ENCODE measurements at regions of chr2 and their contacts with region 1.

Region 1: DNA sequence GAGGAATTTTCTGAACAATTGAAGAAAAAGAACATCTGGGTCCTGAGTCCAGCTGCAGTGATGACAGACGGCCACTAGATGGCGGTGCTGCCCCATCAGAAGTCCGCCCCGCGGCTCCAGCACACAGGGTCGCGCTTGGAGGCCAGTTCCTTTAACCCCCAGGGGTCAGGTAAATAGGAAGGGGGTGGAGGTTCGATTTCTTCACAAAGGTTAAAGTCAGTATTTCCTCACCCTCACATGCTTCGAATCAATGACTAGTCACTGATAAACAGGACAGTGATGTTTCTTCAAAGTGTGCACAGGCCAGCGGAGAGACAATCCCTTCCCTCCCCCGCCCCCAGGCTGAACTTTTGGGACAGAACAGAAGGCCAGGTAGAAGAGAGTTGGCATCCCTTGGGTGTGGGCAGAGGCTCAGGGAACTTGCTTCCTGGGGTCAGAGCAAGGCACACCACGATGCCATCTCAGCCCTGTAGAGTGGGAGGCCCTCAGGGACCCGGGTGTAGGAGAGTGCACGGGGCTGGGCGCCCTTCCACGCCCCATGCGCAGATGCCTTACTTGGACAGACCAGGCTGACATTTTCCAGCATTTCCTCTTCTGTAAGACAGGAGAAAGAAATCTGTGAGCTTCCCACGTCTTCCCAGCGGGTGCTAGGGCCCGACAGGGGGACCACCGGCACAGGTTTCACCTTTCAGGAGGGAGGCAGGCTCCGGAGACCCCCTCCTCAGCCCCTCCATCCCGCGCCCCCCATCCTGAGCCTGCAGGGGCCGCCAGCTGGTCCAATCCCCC is 722 bp downstream of the APOB start:
- DNase-seq: peak; percentile 73
- ATAC-seq: peak; percentile 64
- H3K4me3 Mint-ChIP-seq: no peak overlapping the region
- H3K27ac Mint-ChIP-seq: no peak overlapping the region
- H3K4me1 Mint-ChIP-seq: peaks cover 3% of the 10 kb centered on the region
- H3K27me3 Mint-ChIP-seq: peaks cover 26% of the 10 kb centered on the region

Region 2: DNA sequence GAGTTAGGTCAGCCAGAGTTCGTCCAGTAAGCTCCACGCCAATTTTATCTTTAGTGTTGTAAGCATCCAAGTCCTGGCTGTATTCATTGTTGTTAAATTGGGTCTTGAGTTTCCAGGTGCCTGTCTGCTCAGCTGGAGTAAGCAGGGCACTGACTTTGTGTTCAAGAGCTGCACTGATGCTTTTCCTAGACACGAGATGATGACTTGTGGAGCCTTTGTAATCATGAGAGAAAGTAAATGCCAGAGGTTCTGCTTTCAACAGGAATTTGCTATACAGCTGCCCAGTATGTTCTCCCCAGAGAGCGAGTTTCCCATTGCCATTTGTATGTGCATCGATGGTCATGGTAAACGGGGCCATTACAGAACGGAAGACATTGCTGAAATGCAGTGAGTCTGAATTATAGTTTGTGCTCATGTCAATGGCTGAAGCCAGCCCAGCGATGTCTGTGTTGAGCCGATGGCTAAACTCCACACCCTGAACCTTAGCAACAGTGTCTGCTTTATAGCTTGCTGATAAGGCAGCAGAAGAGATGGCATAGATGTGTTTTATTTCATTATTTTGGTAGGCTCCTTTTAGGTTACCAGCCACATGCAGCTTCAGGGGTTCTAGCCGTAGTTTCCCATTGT is 32.2 kb before region 1 on chr2:
- CTCF ChIA-PET with region 1: no interaction called
- POLR2A ChIA-PET with region 1: no interaction called
- intact Hi-C with region 1: no loop called
- DNase-seq: no peak
- ATAC-seq: no peak
- H3K4me3 Mint-ChIP-seq: no peak overlapping the region
- H3K27ac Mint-ChIP-seq: no peak overlapping the region
- H3K4me1 Mint-ChIP-seq: no peaks in the 10 kb centered on the region
- H3K27me3 Mint-ChIP-seq: peaks cover 3% of the 10 kb centered on the region

Region 3: GRCh38 chr2:21032338-21033236 is 10.6 kb before region 1 on chr2:
- CTCF ChIA-PET with region 1: interaction called, 10 read pairs
- POLR2A ChIA-PET with region 1: no interaction called
- intact Hi-C with region 1: no loop called
- DNase-seq: no peak
- ATAC-seq: no peak
- H3K4me3 Mint-ChIP-seq: no peak overlapping the region
- H3K27ac Mint-ChIP-seq: no peak overlapping the region
- H3K4me1 Mint-ChIP-seq: no peaks in the 10 kb centered on the region
- H3K27me3 Mint-ChIP-seq: peaks cover 12% of the 10 kb centered on the region

Region 4: GRCh38 chr2:21118302-21118920 is 75.3 kb after region 1 on chr2:
- CTCF ChIA-PET with region 1: interaction called, 4 read pairs
- POLR2A ChIA-PET with region 1: no interaction called
- intact Hi-C with region 1: loop called (anchors 1 kb)
- DNase-seq: peak; percentile 39
- ATAC-seq: no peak
- H3K4me3 Mint-ChIP-seq: no peak overlapping the region
- H3K27ac Mint-ChIP-seq: no peak overlapping the region
- H3K4me1 Mint-ChIP-seq: no peaks in the 10 kb centered on the region
- H3K27me3 Mint-ChIP-seq: peaks cover 5% of the 10 kb centered on the region

Region 5: DNA sequence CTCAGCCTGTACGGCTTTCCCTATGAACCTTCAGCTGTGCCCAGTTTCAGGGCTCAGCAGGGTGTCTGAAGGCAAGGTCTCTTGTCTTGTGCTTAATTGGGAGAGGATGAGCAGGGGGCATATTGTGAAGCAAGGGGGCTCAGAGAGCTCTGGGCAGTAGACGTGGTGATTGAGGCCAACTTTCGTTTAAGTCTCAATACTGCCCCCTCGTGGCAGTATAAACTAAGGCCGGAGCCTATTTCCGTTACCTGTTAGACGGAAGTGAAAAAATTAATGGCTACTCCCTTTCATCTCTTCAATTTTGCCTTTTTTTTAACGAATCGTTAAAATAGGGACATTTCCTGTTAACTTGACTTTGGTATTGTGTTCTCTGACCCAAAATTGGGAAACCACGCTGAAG is 274.0 kb after region 1 on chr2:
- CTCF ChIA-PET with region 1: interaction called, 22 read pairs
- POLR2A ChIA-PET with region 1: no interaction called
- intact Hi-C with region 1: loop called (anchors 1 kb)
- DNase-seq: peak; percentile 55
- ATAC-seq: no peak
- H3K4me3 Mint-ChIP-seq: no peak overlapping the region
- H3K27ac Mint-ChIP-seq: no peak overlapping the region
- H3K4me1 Mint-ChIP-seq: no peaks in the 10 kb centered on the region
- H3K27me3 Mint-ChIP-seq: no peaks in the 10 kb centered on the region

Region 6: DNA sequence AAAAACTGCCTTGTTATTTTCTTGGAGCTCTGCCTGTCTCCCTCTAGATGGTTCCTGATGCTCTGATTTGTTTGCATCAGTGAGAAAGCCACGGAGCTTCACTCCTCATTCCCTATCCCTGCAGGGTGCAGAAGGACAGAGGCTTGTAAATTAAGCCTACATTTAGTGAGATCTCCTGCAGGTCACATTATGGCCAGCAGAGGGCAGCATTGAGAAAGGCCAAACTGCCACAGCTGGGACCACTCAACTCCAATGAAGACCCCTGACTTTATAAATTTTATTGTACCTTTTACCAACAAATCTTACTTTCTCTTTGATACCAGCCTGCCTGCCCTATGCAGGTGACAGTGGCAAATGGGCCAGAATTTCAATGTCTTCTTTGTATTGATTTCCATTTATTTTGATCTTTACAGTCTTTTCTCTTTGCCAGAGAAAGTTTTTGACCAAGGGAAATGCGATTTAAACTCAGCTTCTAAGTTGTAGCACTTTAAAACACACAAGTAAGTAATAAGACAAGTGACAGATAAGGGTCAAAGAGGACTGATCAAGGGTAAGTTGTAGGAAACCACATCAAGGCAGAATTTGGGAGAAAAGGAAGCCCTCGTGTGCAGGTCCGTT is 1312.8 kb after region 1 on chr2:
- CTCF ChIA-PET with region 1: no interaction called
- POLR2A ChIA-PET with region 1: no interaction called
- intact Hi-C with region 1: loop called in 1 of 2 experiments (anchors 5 kb)
- DNase-seq: peak; percentile 65
- ATAC-seq: no peak
- H3K4me3 Mint-ChIP-seq: no peak overlapping the region
- H3K27ac Mint-ChIP-seq: no peak overlapping the region
- H3K4me1 Mint-ChIP-seq: no peaks in the 10 kb centered on the region
- H3K27me3 Mint-ChIP-seq: no peaks in the 10 kb centered on the region

Measured in activated CD4-positive, alpha-beta T cell treated with anti-CD3 and anti-CD28 coated beads for 36 hours (primary cell).